Heart left ventricle (tissue), 16 donors: ENCODE measurements at regions of chr20 and their contacts with region 1.

Region 1: GRCh38 chr20:30593572-30593971 is 663.9 kb upstream of the DEFB115 start:
- DNase-seq: no peak
- ATAC-seq: no peak
- H3K4me3 ChIP-seq: no peak overlapping the region
- H3K27ac ChIP-seq: no peak overlapping the region
- H3K4me1 ChIP-seq: no peaks in the 10 kb centered on the region
- H3K27me3 ChIP-seq: no peaks in the 10 kb centered on the region
- CTCF ChIP-seq: no peak
- POLR2A ChIP-seq: no peak

Region 2: DNA sequence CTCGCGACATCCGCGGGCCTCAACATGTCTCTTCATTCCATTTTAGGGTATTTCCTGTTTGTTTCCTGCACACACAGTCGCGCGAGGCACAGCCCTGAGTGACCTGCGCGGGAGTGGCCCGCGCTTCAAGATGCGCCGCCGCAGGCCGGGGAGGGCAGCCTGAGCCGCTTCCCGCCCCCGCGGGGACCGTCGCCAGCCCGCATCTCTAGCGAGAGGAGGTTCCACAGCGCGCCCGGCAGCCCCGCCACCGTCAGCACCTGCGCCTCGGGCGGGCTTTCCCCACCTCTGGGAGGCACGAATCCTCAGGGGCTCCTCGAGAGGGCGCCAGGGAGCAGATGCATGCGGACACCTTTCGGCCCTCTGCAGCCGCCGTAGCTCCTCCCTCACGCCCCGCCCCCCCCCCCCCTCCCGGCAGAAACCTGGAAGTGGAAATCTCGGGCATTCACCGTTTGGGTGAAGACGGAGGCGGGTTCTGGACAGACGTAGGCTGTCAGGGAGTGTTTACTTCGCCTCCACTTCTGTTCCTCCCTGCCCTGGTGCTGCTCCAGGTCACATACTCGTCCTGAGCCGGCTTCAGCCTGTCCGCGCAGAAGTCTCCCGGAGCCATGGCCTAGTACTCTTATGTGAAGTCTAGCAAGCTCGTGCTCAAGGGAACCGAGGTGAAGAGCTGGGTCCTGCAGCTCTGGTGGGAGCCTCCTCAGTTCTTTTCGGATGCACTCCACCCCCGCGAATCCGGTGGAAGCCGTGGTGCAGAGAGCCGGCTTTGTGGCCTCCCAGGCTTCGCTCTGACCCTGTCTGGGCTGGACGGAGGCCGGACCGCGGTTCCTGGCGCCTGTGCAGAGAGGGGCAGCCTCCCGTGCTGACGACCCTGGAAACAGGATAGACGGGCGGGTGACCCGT is 216.6 kb before region 1 on chr20:
- intact Hi-C with region 1: loop called in 1 of 10 experiments (anchors 10 kb)
- DNase-seq: peak; percentile 78 to 91 (median 89)
- ATAC-seq: peak; percentile 69 to 92 (median 87)
- H3K4me3 ChIP-seq: peak overlapping the region; percentile 59 to 98 (median 77)
- H3K27ac ChIP-seq: peak overlapping the region in 11 of 12 donors; percentile 55 to 88 (median 78)
- H3K4me1 ChIP-seq: peaks cover 0 to 20% (median 4%) of the 10 kb centered on the region in 12 donors
- H3K27me3 ChIP-seq: no peaks in the 10 kb centered on the region
- CTCF ChIP-seq: peak; percentile 55 to 87 (median 70)
- POLR2A ChIP-seq: no peak